Activated CD4-positive, alpha-beta memory T cell treated with anti-CD3 and anti-CD28 coated beads for 36 hours (primary cell): ENCODE measurements at regions of chr14 and their contacts with region 1.

Region 1: GRCh38 chr14:55446218-55446654 is 5.8 kb upstream of the TBPL2 start:
- DNase-seq: peak; percentile 59
- H3K4me3 Mint-ChIP-seq: no peak overlapping the region
- H3K27ac Mint-ChIP-seq: no peak overlapping the region
- H3K4me1 Mint-ChIP-seq: peaks cover 23% of the 10 kb centered on the region
- H3K27me3 Mint-ChIP-seq: no peaks in the 10 kb centered on the region

Region 2: DNA sequence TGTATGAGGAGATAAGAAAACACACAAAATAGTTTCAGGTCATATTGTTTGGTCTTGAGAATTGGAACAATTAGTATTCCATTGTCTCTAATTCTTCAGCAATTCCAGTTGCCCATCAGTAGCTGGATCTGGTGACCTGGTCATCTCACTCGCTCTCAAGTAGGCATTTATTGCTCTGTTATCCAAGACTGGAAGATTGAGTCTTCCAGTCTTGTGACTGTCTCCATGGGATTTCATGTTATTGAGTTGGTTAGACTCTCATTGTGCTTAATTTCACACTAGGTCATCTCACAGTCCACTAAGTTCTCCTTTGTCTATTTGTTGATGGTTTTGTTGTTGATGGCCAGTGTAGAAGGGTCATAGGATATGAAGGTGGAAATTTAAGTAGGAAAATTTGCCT is 127.5 kb before region 1 on chr14:
- CTCF ChIA-PET with region 1: no interaction called
- POLR2A ChIA-PET with region 1: no interaction called
- intact Hi-C with region 1: no loop called
- DNase-seq: no peak
- H3K4me3 Mint-ChIP-seq: no peak overlapping the region
- H3K27ac Mint-ChIP-seq: no peak overlapping the region
- H3K4me1 Mint-ChIP-seq: peaks cover 14% of the 10 kb centered on the region
- H3K27me3 Mint-ChIP-seq: no peaks in the 10 kb centered on the region

Region 3: GRCh38 chr14:55398679-55399078 is 47.6 kb before region 1 on chr14:
- CTCF ChIA-PET with region 1: no interaction called
- POLR2A ChIA-PET with region 1: no interaction called
- intact Hi-C with region 1: no loop called
- DNase-seq: no peak
- H3K4me3 Mint-ChIP-seq: no peak overlapping the region
- H3K27ac Mint-ChIP-seq: no peak overlapping the region
- H3K4me1 Mint-ChIP-seq: peaks cover 31% of the 10 kb centered on the region
- H3K27me3 Mint-ChIP-seq: no peaks in the 10 kb centered on the region

Region 4: GRCh38 chr14:55430024-55430690 is 16.1 kb before region 1 on chr14:
- CTCF ChIA-PET with region 1: interaction called, 36 read pairs
- POLR2A ChIA-PET with region 1: no interaction called
- intact Hi-C with region 1: no loop called
- DNase-seq: peak; percentile 24
- H3K4me3 Mint-ChIP-seq: no peak overlapping the region
- H3K27ac Mint-ChIP-seq: peak overlapping the region; percentile 20
- H3K4me1 Mint-ChIP-seq: peaks cover 28% of the 10 kb centered on the region
- H3K27me3 Mint-ChIP-seq: no peaks in the 10 kb centered on the region

Region 5: GRCh38 chr14:55579724-55580469 is 133.7 kb after region 1 on chr14 and contains the start of gene KTN1:
- CTCF ChIA-PET with region 1: interaction called, 21 read pairs
- POLR2A ChIA-PET with region 1: no interaction called
- intact Hi-C with region 1: loop called (anchors 5 kb)
- DNase-seq: peak; percentile 87
- H3K4me3 Mint-ChIP-seq: peak within 1 kb of the TSS; percentile 92
- H3K27ac Mint-ChIP-seq: peak within 1 kb of the TSS; percentile 90
- H3K4me1 Mint-ChIP-seq: peaks cover 31% of the 10 kb centered on the region
- H3K27me3 Mint-ChIP-seq: no peaks in the 10 kb centered on the region
- total RNA-seq, gene KTN1: 126 to 134 TPM

Region 6: GRCh38 chr14:55699131-55700057 is 253.2 kb after region 1 on chr14:
- CTCF ChIA-PET with region 1: no interaction called
- POLR2A ChIA-PET with region 1: no interaction called
- intact Hi-C with region 1: loop called (anchors 10 kb)
- DNase-seq: no peak
- H3K4me3 Mint-ChIP-seq: no peak overlapping the region
- H3K27ac Mint-ChIP-seq: no peak overlapping the region
- H3K4me1 Mint-ChIP-seq: no peaks in the 10 kb centered on the region
- H3K27me3 Mint-ChIP-seq: no peaks in the 10 kb centered on the region

Region 7: DNA sequence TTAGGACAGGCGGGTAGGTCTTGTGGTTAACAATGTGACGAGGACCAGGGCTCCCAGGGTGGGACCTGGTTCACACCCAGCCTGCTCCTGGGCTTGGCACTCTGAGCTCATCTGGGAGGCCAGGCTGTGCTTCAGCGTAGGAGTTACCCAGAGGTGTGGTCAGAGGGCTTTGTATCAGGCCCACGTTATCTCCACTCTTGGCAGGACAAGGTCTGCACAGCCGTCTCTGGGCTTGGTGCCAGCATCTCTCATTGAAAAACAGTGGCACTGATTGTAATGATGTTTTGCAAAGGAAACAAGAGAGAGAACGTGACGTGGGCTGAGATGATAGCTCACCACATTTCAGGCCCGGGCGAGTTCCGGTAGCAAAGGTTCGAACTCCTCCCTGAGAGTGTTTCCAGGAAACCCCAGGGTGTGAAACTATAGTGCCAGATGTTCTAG is 360.8 kb after region 1 on chr14:
- CTCF ChIA-PET with region 1: no interaction called
- POLR2A ChIA-PET with region 1: no interaction called
- intact Hi-C with region 1: loop called (anchors 10 kb)
- DNase-seq: peak; percentile 86
- H3K4me3 Mint-ChIP-seq: peak overlapping the region; percentile 33
- H3K27ac Mint-ChIP-seq: peak overlapping the region; percentile 82
- H3K4me1 Mint-ChIP-seq: peaks cover 54% of the 10 kb centered on the region
- H3K27me3 Mint-ChIP-seq: no peaks in the 10 kb centered on the region

Region 8: DNA sequence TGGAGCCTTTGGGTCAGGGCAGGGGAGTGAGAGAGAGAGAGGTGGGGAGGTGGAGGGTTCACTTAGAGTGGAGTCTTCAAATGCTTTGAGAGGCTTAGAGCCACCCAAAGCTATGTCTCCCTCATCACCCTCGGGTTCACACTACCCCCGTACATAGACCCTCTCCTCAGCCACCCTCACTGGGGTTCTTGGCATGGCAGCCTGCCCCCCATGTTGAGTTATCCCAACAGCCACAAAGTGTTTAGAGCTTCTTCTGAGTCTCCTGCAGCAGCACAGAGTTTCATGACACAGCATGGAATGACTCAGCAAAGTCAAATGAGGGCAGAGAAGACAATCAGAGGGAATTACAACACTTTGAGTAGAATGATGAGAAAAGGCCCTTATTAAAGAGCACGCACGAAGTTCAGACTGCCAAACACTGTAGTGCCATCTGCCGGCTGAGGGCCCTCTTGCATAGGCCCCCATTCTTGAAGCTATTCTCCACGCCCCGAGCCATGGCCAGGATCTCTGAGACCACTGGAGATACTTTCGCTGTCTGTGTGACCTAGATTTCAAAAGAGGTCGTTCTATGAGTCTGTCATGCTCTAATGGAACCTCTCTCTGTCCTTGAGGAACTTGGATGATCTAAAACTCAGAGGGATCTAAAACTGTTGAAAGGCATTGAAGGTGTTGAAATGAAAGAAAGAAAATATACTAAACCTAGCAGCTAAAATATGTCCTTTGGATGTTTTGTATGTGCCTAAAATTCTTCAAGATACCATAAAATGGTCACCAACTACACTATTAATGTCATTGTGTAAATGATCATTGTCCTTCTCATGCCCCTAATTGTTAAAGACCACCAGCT is 893.8 kb after region 1 on chr14:
- CTCF ChIA-PET with region 1: no interaction called
- POLR2A ChIA-PET with region 1: no interaction called
- intact Hi-C with region 1: loop called (anchors 10 kb)
- DNase-seq: peak; percentile 72
- H3K4me3 Mint-ChIP-seq: no peak overlapping the region
- H3K27ac Mint-ChIP-seq: no peak overlapping the region
- H3K4me1 Mint-ChIP-seq: peaks cover 2% of the 10 kb centered on the region
- H3K27me3 Mint-ChIP-seq: no peaks in the 10 kb centered on the region

Region 9: GRCh38 chr14:56474419-56475022 is 1028.3 kb after region 1 on chr14:
- CTCF ChIA-PET with region 1: interaction called, 16 read pairs
- POLR2A ChIA-PET with region 1: no interaction called
- intact Hi-C with region 1: loop called (anchors 5 kb)
- DNase-seq: no peak
- H3K4me3 Mint-ChIP-seq: no peak overlapping the region
- H3K27ac Mint-ChIP-seq: no peak overlapping the region
- H3K4me1 Mint-ChIP-seq: no peaks in the 10 kb centered on the region
- H3K27me3 Mint-ChIP-seq: peaks cover 2% of the 10 kb centered on the region